A549 (cell line): ENCODE measurements at regions of chr12 and their contacts with region 1.

Region 1: DNA sequence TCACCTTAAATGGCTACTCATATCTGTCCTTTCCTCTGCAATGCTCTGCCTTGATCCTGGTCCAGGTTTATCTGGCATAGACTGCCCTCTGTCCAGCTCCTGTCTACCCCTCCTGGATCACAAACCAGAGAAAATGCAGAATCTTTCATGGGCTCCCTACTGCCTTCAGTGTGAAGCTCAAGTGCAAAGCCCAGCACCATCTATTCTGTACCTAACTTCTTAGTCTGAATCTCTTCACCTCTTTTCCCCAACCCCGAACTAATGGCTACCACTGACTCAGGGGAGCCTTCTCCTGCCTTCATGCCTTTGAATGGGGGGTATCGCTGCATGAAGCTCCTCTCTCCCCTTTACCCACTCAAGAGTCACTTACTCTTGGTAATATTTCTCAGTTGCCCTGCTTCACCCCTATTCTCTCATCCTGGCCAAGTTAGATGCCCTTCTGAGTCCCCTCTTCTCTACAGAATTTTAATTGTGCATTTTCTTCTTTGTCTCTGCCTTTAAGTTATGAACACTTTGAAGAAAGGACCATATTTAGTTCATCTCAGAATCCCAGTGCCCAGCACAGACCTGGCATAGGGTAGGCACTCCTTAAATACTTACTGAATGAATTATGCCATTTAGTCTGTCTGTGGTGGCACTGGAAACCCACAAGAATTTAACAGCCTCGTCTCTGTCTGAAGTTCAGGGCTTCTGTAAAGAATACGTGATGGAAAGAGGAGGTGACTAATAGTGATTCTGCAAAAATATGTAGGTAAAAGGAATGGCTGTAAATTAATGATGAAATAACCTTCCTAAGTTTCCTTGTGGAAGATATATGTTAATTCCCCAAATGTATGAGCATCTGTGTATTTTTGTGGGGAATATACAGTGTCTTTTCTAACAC is 191.3 kb upstream of the AMIGO2 start:
- DNase-seq: peak; percentile 73 to 98
- ATAC-seq: peak; percentile 94
- H3K4me3 ChIP-seq: no peak overlapping the region
- H3K27ac ChIP-seq: peak overlapping the region; percentile 91 to 100
- H3K4me1 ChIP-seq: peaks cover 58% of the 10 kb centered on the region
- CTCF ChIP-seq: no peak
- EP300 ChIP-seq: peak; percentile 97
- POLR2A ChIP-seq: no peak
- RAD21 ChIP-seq: peak; percentile 56 to 58; a peak in 4 of 5 replicates

Region 2: GRCh38 chr12:47121146-47121545 is 149.9 kb before region 1 on chr12:
- CTCF ChIA-PET with region 1: no interaction called
- POLR2A ChIA-PET with region 1: no interaction called
- DNase-seq: no peak
- ATAC-seq: peak in 1 of 2 experiments; percentile 53; a peak in 1 of 6 replicates
- H3K4me3 ChIP-seq: no peak overlapping the region
- H3K27ac ChIP-seq: peak overlapping the region; percentile 44 to 52
- H3K4me1 ChIP-seq: peaks cover 37% of the 10 kb centered on the region
- CTCF ChIP-seq: no peak
- EP300 ChIP-seq: no peak
- POLR2A ChIP-seq: no peak
- RAD21 ChIP-seq: no peak

Region 3: DNA sequence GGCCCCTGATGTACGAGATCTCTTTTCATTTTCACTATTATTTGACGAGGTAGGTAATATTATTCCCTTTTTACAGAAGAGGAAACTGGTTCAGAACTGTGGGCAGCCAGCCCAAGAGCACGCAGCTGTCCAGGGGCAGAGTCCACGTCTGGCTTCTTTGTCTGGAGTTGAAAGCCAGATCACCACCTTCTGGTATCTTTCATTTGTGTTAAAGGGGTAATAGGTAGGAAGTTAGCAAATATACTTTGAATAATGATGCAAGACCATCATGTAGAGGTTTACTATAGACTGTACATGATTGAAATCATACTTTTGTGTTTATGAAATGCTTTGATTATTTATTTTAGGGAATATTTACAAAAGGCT is 47.2 kb before region 1 on chr12:
- CTCF ChIA-PET with region 1: interaction called, 4 read pairs
- POLR2A ChIA-PET with region 1: interaction called, 11 read pairs
- DNase-seq: peak in 1 of 2 experiments; percentile 95
- ATAC-seq: peak; percentile 65 to 73
- H3K4me3 ChIP-seq: peak overlapping the region; percentile 44
- H3K27ac ChIP-seq: peak overlapping the region; percentile 98 to 99
- H3K4me1 ChIP-seq: peaks cover 83% of the 10 kb centered on the region
- CTCF ChIP-seq: no peak
- EP300 ChIP-seq: peak in 1 of 2 experiments; percentile 17; a peak in 1 of 5 replicates
- POLR2A ChIP-seq: no peak
- RAD21 ChIP-seq: peak; percentile 24 to 34; a peak in 2 of 5 replicates

Region 4: GRCh38 chr12:47337581-47337980 is 66.6 kb after region 1 on chr12:
- CTCF ChIA-PET with region 1: no interaction called
- POLR2A ChIA-PET with region 1: no interaction called
- DNase-seq: no peak
- ATAC-seq: no peak
- H3K4me3 ChIP-seq: no peak overlapping the region
- H3K27ac ChIP-seq: no peak overlapping the region
- H3K4me1 ChIP-seq: no peaks in the 10 kb centered on the region
- CTCF ChIP-seq: no peak
- EP300 ChIP-seq: no peak
- POLR2A ChIP-seq: no peak
- RAD21 ChIP-seq: no peak

Region 5: DNA sequence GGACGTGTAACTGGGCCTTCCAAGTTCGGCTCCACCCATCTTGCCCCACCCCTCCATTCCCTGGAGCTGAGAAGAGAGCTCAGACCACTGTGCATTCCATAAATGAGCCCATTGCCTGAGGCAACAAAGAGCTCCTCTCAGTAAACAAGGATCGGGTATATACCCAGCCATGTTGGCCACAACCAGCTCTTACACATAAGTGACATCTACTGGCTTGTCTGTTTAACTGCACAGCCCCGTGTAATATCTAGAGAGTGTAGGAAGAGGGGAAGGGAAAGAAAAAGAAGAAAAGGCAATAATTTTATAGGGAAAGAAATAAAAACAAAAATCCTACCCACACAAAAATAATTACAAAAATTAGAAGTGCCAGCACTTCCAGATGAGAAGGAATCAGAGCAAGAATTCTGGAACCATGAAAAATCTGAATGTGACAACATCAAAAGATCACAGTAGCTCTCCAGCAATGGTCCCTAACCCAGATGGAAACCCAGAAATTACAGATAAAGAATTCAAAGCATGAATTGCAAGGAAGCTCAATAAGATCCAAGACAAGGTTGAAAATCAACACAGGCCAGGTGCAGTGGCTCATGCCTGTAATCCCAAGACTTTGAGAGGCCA is 126.8 kb after region 1 on chr12:
- CTCF ChIA-PET with region 1: interaction called, 10 read pairs
- POLR2A ChIA-PET with region 1: interaction called, 3 read pairs
- DNase-seq: peak; percentile 51 to 95
- ATAC-seq: peak; percentile 88 to 93
- H3K4me3 ChIP-seq: no peak overlapping the region
- H3K27ac ChIP-seq: peak overlapping the region; percentile 73 to 86
- H3K4me1 ChIP-seq: peaks cover 34% of the 10 kb centered on the region
- CTCF ChIP-seq: peak; percentile 55
- EP300 ChIP-seq: no peak
- POLR2A ChIP-seq: no peak
- RAD21 ChIP-seq: peak; percentile 81 to 94